ENCODE measurements at regions of chr4 and their contacts with region 1.

Region 1: GRCh38 chr4:113958766-113959538 is 20.5 kb downstream of the ARSJ start:
- DNase-seq: peak; percentile 32
- H3K4me3 ChIP-seq: no peak overlapping the region
- H3K27ac ChIP-seq: peak overlapping the region; percentile 3 to 55
- H3K4me1 ChIP-seq: no peaks in the 10 kb centered on the region
- H3K27me3 ChIP-seq: no peaks in the 10 kb centered on the region
- CTCF ChIP-seq: no peak
- POLR2A ChIP-seq: no peak

Region 2: DNA sequence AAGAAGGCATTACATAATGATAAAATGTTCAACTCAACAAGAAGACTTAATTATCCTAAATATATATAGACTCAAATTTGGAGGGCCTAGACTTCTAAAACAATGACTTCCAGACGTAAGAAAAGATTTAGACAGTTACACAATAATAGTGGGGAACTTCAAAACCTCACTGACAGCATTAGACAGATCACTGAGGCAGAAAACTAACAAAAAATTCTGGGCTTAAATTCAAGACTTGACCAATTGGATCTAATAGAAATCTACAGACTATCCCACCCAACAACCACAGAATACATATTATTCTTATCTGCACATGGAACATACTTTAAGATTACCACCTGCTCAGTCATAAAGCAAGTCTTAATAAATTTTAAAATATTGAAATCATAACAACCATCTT is 113.8 kb after region 1 on chr4:
- intact Hi-C with region 1: loop called (anchors 5 kb)
- DNase-seq: no peak
- H3K4me3 ChIP-seq: no peak overlapping the region
- H3K27ac ChIP-seq: no peak overlapping the region
- H3K4me1 ChIP-seq: no peaks in the 10 kb centered on the region
- H3K27me3 ChIP-seq: no peaks in the 10 kb centered on the region
- CTCF ChIP-seq: no peak
- POLR2A ChIP-seq: no peak